PC-3 (cell line): ENCODE measurements at regions of chr4 and their contacts with region 1.

Region 1: DNA sequence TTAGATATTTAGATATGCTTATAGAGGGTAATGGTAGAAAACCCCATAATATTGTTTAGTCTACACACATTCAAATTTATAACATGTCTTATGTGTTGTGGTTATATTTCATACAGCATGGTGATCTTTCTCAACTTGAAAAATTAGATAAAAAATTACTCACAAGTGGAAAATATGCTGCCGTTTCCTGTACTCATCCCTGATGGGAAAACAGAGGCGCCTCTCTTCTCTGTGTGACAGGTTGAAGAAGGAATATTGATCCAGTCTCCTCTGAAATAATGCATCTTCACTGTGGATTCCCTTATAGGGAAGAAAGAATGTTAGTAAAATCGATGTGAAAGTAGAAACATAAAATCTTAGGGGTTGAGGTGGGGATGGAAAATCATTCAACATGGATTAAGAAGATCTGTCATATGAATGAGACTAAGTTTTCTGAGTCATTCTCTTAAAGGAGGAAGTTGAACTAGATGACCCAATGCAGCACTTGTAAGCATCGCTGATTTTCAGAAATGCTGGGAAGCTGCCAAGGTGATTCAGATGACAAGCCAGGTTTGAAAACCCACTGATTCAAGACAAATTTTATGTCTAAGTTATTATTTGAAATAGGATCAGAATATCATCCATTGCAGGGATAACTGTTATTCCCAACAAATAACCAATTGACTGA is 70.7 kb downstream of the ANKRD50 start:
- DNase-seq: peak; percentile 93
- ATAC-seq: peak; percentile 75
- H3K4me3 ChIP-seq: no peak overlapping the region; the same call in 1 of the 2 replicates
- H3K27ac ChIP-seq: peak overlapping the region; percentile 77
- H3K4me1 ChIP-seq: peaks cover 38% of the 10 kb centered on the region
- H3K27me3 ChIP-seq: no peaks in the 10 kb centered on the region
- CTCF ChIP-seq: no peak

Region 2: GRCh38 chr4:124427095-124427767 is 214.6 kb before region 1 on chr4:
- CTCF ChIA-PET with region 1: no interaction called
- POLR2A ChIA-PET with region 1: no interaction called
- intact Hi-C with region 1: loop called (anchors 5 kb)
- DNase-seq: peak; percentile 56
- ATAC-seq: peak; percentile 60
- H3K4me3 ChIP-seq: no peak overlapping the region
- H3K27ac ChIP-seq: peak overlapping the region; percentile 77
- H3K4me1 ChIP-seq: peaks cover 61% of the 10 kb centered on the region
- H3K27me3 ChIP-seq: no peaks in the 10 kb centered on the region
- CTCF ChIP-seq: no peak

Region 3: GRCh38 chr4:124931050-124931449 is 289.2 kb after region 1 on chr4:
- CTCF ChIA-PET with region 1: no interaction called
- POLR2A ChIA-PET with region 1: no interaction called
- intact Hi-C with region 1: no loop called
- DNase-seq: peak; percentile 78
- ATAC-seq: peak; percentile 79
- H3K4me3 ChIP-seq: no peak overlapping the region
- H3K27ac ChIP-seq: peak overlapping the region; percentile 48
- H3K4me1 ChIP-seq: peaks cover 28% of the 10 kb centered on the region
- H3K27me3 ChIP-seq: no peaks in the 10 kb centered on the region
- CTCF ChIP-seq: no peak